H1 (cell line): ENCODE measurements at regions of chr10 and their contacts with region 1.

Region 1: GRCh38 chr10:127977357-127978009 is 70.6 kb downstream of the PTPRE start:
- DNase-seq: no peak
- H3K4me3 ChIP-seq: no peak overlapping the region
- H3K27ac ChIP-seq: no peak overlapping the region
- H3K4me1 ChIP-seq: peaks cover 0 to 5% (median 0%) of the 10 kb centered on the region in 4 experiments; a peak in 3 of 7 replicates
- H3K27me3 ChIP-seq: no peaks in the 10 kb centered on the region
- CTCF ChIP-seq: no peak
- EP300 ChIP-seq: no peak
- POLR2A ChIP-seq: no peak
- RAD21 ChIP-seq: no peak

Region 2: GRCh38 chr10:127919418-127920271 is 57.8 kb before region 1 on chr10:
- CTCF ChIA-PET with region 1: interaction called, 17 read pairs
- POLR2A ChIA-PET with region 1: no interaction called
- DNase-seq: peak in 1 of 2 experiments; percentile 44
- H3K4me3 ChIP-seq: no peak overlapping the region
- H3K27ac ChIP-seq: no peak overlapping the region
- H3K4me1 ChIP-seq: peaks cover 0 to 2% (median 0%) of the 10 kb centered on the region in 4 experiments; a peak in 3 of 7 replicates
- H3K27me3 ChIP-seq: no peaks in the 10 kb centered on the region
- CTCF ChIP-seq: peak; percentile 43 to 65 (median 59)
- EP300 ChIP-seq: no peak
- POLR2A ChIP-seq: no peak
- RAD21 ChIP-seq: peak; percentile 4 to 24; a peak in 1 of 4 replicates